ENCODE measurements at regions of chr7 and their contacts with region 1.

Region 1: GRCh38 chr7:14457568-14458453 is 444.7 kb downstream of the DGKB start:
- DNase-seq: peak in 4 of 5 donors; percentile 37 to 47 (median 46)
- H3K4me3 ChIP-seq: no peak overlapping the region
- H3K4me3 Mint-ChIP-seq: no peak overlapping the region
- H3K27ac ChIP-seq: no peak overlapping the region
- H3K27ac Mint-ChIP-seq: no peak overlapping the region
- H3K4me1 ChIP-seq: no peaks in the 10 kb centered on the region
- H3K4me1 Mint-ChIP-seq: peaks cover 0 to 4% (median 2%) of the 10 kb centered on the region in 4 donors
- H3K27me3 ChIP-seq: no peaks in the 10 kb centered on the region
- H3K27me3 Mint-ChIP-seq: peaks cover 1 to 3% of the 10 kb centered on the region in 2 donors

Region 2: GRCh38 chr7:13279854-13280435 is 1177.9 kb before region 1 on chr7:
- CTCF ChIA-PET with region 1: interaction called, 10 read pairs
- POLR2A ChIA-PET with region 1: no interaction called
- intact Hi-C with region 1: loop called (anchors 1 kb)
- DNase-seq: peak in 4 of 5 donors; percentile 6 to 36 (median 26)
- H3K4me3 ChIP-seq: no peak overlapping the region
- H3K4me3 Mint-ChIP-seq: no peak overlapping the region
- H3K27ac ChIP-seq: no peak overlapping the region
- H3K27ac Mint-ChIP-seq: no peak overlapping the region
- H3K4me1 ChIP-seq: no peaks in the 10 kb centered on the region
- H3K4me1 Mint-ChIP-seq: no peaks in the 10 kb centered on the region
- H3K27me3 ChIP-seq: no peaks in the 10 kb centered on the region
- H3K27me3 Mint-ChIP-seq: peaks cover 2 to 4% of the 10 kb centered on the region in 2 donors

Region 3: DNA sequence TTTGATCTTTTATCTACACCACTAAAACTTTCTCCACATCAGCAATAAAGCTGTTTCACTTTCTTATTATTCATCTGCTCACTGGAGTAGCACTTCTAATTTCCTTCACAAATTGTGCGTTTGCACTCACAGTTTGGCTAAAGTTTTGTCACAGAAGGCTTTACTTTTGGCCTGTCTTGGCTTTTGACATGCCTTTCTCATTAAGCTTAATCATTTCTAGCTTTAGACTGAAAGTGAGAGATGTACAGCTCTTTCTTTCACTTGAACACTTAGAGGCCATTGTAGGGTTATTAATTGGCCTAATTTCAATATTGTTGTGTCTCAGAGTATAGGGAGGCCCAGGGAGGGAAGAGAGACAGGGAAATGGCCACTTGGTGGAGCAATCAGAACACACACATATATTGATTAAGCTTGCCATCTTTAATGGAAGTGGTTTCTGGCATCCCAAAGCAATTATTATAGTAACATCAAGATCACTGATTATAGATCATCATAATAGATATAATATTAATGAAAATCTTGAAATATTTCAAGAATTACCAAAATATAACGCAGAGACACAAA is 980.8 kb before region 1 on chr7:
- CTCF ChIA-PET with region 1: no interaction called
- POLR2A ChIA-PET with region 1: no interaction called
- intact Hi-C with region 1: loop called (anchors 2 kb)
- DNase-seq: no peak
- H3K4me3 ChIP-seq: no peak overlapping the region
- H3K4me3 Mint-ChIP-seq: no peak overlapping the region
- H3K27ac ChIP-seq: no peak overlapping the region
- H3K27ac Mint-ChIP-seq: no peak overlapping the region
- H3K4me1 ChIP-seq: no peaks in the 10 kb centered on the region
- H3K4me1 Mint-ChIP-seq: peaks cover 0 to 3% (median 0%) of the 10 kb centered on the region in 4 donors
- H3K27me3 ChIP-seq: no peaks in the 10 kb centered on the region
- H3K27me3 Mint-ChIP-seq: no peaks in the 10 kb centered on the region

Region 4: GRCh38 chr7:13524076-13524475 is 933.7 kb before region 1 on chr7:
- CTCF ChIA-PET with region 1: interaction called, 6 read pairs
- POLR2A ChIA-PET with region 1: no interaction called
- intact Hi-C with region 1: loop called (anchors 1 kb)
- DNase-seq: no peak
- H3K4me3 ChIP-seq: no peak overlapping the region
- H3K4me3 Mint-ChIP-seq: no peak overlapping the region
- H3K27ac ChIP-seq: no peak overlapping the region
- H3K27ac Mint-ChIP-seq: no peak overlapping the region
- H3K4me1 ChIP-seq: no peaks in the 10 kb centered on the region
- H3K4me1 Mint-ChIP-seq: no peaks in the 10 kb centered on the region
- H3K27me3 ChIP-seq: no peaks in the 10 kb centered on the region
- H3K27me3 Mint-ChIP-seq: peaks cover 3% of the 10 kb centered on the region in 2 donors

Region 5: GRCh38 chr7:14817829-14818614 is 360.2 kb after region 1 on chr7:
- CTCF ChIA-PET with region 1: no interaction called
- POLR2A ChIA-PET with region 1: no interaction called
- intact Hi-C with region 1: no loop called
- DNase-seq: no peak
- H3K4me3 ChIP-seq: no peak overlapping the region
- H3K4me3 Mint-ChIP-seq: no peak overlapping the region
- H3K27ac ChIP-seq: no peak overlapping the region
- H3K27ac Mint-ChIP-seq: no peak overlapping the region
- H3K4me1 ChIP-seq: no peaks in the 10 kb centered on the region
- H3K4me1 Mint-ChIP-seq: no peaks in the 10 kb centered on the region
- H3K27me3 ChIP-seq: no peaks in the 10 kb centered on the region
- H3K27me3 Mint-ChIP-seq: no peaks in the 10 kb centered on the region

Region 6: DNA sequence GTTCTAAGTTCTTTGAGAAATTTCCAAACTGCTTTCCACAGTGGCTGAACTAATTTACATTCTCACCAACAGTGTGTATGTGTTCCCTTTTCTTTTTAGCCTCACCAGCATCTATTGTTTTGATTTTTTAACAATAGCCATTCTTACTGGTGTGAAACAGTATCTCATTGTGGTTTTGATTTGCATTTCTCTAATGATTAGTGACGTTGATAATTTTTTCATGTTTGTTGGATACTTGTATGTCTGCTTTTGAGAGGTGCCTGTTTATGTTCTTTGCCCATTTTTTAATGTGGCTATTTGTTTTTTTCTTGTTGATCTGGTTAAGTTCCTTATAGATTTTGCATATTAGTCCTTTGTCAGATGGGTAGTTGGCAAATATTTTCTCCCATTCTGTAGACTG is 912.6 kb after region 1 on chr7:
- CTCF ChIA-PET with region 1: no interaction called
- POLR2A ChIA-PET with region 1: no interaction called
- intact Hi-C with region 1: no loop called
- DNase-seq: no peak
- H3K4me3 ChIP-seq: no peak overlapping the region
- H3K4me3 Mint-ChIP-seq: no peak overlapping the region
- H3K27ac ChIP-seq: no peak overlapping the region
- H3K27ac Mint-ChIP-seq: no peak overlapping the region
- H3K4me1 ChIP-seq: no peaks in the 10 kb centered on the region
- H3K4me1 Mint-ChIP-seq: no peaks in the 10 kb centered on the region
- H3K27me3 ChIP-seq: no peaks in the 10 kb centered on the region
- H3K27me3 Mint-ChIP-seq: no peaks in the 10 kb centered on the region